Head of caudate nucleus (tissue), 42 donors: ENCODE measurements at regions of chr19 and their contacts with region 1.

Region 1: GRCh38 chr19:2236314-2237050 is at the starts of genes PLEKHJ1 and SF3A2:
- DNase-seq: peak; percentile 83 to 98 (median 95)

Region 2: DNA sequence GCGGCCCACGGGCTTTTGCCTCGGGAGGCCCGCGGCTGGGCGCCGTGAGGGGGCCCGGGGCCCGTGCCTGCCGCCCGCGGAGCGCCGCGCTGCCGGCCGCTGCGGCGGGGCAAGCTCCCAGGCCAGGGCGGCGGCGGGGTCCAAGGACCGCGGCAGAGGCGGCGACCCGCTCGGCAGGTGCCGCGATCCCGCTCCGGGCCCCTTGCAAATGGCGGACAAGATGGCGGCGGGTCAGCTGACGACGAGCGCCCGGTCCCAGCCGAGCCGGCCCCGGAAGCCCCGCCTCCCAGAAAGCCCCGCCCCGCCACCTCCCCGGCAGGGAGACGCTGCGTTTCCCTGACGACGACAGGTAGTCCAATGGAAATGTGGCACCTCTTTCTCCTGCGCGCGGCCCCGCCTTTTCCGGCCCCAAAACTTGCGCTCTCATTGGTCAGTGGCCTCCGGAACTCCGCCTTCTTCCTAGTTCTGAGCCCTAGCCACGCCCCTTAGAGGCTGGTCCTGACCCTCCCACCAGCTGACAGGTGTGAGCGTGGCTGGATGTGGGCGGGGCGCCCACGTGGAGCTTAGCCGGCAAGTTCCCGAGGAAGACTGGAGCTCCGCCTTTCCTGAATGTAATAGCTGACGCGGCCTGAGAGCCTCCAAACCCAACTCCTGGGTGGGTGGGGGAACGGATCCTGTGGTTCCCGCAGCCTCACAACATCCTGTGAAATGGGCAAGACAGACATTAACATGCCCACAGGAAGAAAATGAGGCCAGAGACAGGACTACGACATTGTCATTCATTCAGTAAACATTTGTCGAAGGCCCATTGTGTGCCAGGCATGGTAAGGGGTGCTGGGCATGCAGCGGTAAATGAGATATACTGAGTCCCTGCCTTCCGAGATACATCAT is 84.9 kb before region 1 on chr19 and contains the start of gene AP3D1:
- intact Hi-C with region 1: loop called (anchors 5 kb)
- DNase-seq: peak; percentile 97 to 100 (median 99)

Region 3: DNA sequence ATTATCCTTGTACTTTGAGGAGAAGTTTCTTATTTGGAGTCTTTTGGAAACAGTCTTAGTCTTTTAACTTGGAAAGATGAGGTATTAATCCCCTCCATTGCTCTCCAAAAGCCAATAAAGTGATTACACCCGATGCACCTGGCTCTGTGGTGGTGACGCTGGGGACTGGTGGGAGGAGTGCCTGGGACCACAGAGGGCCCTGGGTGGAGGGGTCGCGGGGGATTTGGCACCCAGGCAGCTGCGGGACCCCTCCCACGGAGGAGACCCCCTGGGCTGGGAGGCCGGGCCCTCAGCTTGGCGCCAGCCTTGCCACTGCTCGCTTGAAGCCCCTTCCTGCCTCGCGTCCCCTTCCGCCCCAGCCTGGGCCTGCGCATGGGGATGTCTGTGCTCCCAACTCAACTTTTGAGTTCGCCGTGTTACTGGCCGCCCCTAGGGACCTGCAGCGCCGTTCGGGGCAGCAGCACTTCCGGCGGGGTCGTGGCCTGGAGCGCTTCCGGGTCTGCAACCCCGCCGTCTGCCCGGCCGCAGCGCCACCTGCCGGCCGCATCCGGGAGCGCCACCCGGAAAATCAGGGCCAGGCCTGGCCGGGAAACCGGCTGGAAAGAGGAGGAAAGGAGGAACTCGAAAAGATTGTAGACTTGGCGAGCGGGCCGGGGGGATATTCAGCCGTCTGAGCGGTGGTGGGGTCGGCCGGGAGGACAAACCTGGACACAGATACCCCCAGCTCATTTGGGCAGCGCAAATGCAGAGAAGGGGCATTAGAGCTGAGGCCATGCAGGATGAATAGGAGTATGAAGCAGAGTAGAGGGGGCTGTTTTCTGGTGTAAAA is 37.1 kb after region 1 on chr19:
- intact Hi-C with region 1: loop called (anchors 2 kb)
- DNase-seq: peak in 36 of 42 donors; percentile 42 to 86 (median 72)

Region 4: GRCh38 chr19:2315818-2316353 is 79.4 kb after region 1 on chr19:
- intact Hi-C with region 1: loop called (anchors 5 kb)
- DNase-seq: peak; percentile 62 to 91 (median 81)